WTC11 (cell line): ENCODE measurements at regions of chr11 and their contacts with region 1.

Region 1: DNA sequence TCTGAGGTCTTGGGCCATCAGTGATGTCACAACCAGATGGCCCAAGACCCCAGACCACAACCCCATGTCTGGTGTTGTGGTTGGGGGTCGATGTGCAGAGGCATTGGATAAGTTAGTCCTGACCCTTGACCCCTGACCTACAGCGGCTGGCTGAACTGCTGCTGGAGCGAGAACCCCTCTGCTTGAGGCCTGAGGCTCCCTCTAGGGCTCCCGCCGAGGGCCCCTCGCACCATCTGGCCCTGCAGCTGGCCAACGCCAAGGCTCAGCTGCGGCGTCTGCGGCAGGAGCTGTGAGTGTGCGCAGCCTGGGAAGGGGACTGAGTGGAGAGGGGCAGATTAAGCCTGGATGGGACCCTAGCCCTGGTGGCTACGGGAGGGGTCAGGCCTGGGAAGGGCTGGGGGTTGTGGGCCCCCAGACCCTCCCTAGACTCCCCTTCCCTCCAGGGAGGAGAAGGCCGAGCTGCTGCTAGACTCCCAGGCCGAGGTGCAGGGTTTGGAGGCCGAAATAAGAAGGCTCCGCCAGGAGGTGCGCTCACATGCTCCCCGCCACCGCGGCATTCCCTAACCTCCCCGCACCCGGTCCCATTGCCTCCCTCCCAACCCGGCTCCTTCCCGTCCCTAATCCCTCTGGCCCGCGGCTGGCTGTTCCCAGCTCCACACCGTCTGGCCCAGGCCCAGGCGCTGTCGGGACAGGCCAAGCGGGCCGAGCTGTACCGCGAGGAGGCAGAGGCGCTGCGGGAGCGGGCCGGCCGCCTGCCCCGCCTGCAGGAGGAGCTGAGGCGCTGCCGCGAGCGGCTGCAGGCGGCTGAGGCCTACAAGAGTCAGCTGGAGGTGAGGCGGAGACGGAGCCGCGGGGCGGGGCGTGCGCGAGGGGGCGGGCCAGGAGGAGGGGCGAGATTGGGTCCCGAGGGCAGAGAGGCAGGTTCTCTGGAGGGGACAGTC is 2.1 kb downstream of the CCDC88B start:
- DNase-seq: peak; percentile 97
- ATAC-seq: peak; percentile 75
- H3K4me3 Mint-ChIP-seq: peak overlapping the region; percentile 69
- H3K27ac Mint-ChIP-seq: no peak overlapping the region
- H3K4me1 Mint-ChIP-seq: peaks cover 21% of the 10 kb centered on the region
- H3K27me3 Mint-ChIP-seq: peaks cover 30% of the 10 kb centered on the region
- CTCF ChIP-seq: no peak

Region 2: DNA sequence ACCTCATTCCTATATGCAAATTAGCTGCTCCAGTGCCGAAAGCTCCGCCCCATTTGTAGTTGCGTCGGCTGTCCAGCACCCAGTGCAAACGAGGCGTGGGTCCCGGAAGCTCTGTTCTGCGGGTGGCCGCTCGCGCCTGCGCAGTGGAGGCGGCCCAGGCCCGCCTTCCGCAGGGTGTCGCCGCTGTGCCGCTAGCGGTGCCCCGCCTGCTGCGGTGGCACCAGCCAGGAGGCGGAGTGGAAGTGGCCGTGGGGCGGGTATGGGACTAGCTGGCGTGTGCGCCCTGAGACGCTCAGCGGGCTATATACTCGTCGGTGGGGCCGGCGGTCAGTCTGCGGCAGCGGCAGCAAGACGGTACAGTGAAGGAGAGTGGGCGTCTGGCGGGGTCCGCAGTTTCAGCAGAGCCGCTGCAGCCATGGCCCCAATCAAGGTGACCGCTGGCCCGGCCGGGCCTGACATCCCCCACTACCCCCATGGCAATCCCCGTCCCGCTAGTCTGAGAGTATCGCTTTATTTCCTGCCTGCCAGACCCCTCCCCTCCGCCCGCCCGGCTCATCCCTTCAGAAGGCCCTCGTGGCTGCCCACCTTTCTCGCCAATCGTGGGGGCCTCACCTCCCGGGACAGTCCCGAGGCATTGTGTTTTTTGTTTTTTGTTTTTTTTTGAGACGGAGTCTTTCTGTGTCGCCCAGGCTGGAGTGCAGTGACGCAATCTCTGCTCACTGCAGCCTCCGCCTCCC is 24.0 kb before region 1 on chr11 and contains the start of gene PRDX5:
- CTCF ChIA-PET with region 1: interaction called, 123 read pairs
- POLR2A ChIA-PET with region 1: interaction called, 14 read pairs
- DNase-seq: peak; percentile 90
- ATAC-seq: peak; percentile 71
- H3K4me3 Mint-ChIP-seq: peak within 1 kb of the TSS; percentile 90
- H3K27ac Mint-ChIP-seq: peak within 1 kb of the TSS; percentile 99
- H3K4me1 Mint-ChIP-seq: peaks cover 17% of the 10 kb centered on the region
- H3K27me3 Mint-ChIP-seq: no peaks in the 10 kb centered on the region
- CTCF ChIP-seq: no peak
- total RNA-seq, gene PRDX5: 255 to 293 TPM (median 282 TPM) in 3 replicates

Region 3: GRCh38 chr11:64331557-64332371 is 10.4 kb before region 1 on chr11:
- CTCF ChIA-PET with region 1: interaction called, 118 read pairs
- POLR2A ChIA-PET with region 1: no interaction called
- DNase-seq: peak; percentile 65
- ATAC-seq: peak; percentile 79
- H3K4me3 Mint-ChIP-seq: no peak overlapping the region
- H3K27ac Mint-ChIP-seq: peak overlapping the region; percentile 11
- H3K4me1 Mint-ChIP-seq: peaks cover 10% of the 10 kb centered on the region
- H3K27me3 Mint-ChIP-seq: peaks cover 12% of the 10 kb centered on the region; the same call in 1 of the 2 replicates
- CTCF ChIP-seq: no peak

Region 4: GRCh38 chr11:64378335-64378880 is 36.3 kb after region 1 on chr11:
- CTCF ChIA-PET with region 1: interaction called, 15 read pairs
- POLR2A ChIA-PET with region 1: no interaction called
- DNase-seq: no peak
- ATAC-seq: no peak
- H3K4me3 Mint-ChIP-seq: no peak overlapping the region
- H3K27ac Mint-ChIP-seq: no peak overlapping the region
- H3K4me1 Mint-ChIP-seq: peaks cover 5% of the 10 kb centered on the region
- H3K27me3 Mint-ChIP-seq: peaks cover 6% of the 10 kb centered on the region; the same call in 1 of the 2 replicates
- CTCF ChIP-seq: no peak

Region 5: DNA sequence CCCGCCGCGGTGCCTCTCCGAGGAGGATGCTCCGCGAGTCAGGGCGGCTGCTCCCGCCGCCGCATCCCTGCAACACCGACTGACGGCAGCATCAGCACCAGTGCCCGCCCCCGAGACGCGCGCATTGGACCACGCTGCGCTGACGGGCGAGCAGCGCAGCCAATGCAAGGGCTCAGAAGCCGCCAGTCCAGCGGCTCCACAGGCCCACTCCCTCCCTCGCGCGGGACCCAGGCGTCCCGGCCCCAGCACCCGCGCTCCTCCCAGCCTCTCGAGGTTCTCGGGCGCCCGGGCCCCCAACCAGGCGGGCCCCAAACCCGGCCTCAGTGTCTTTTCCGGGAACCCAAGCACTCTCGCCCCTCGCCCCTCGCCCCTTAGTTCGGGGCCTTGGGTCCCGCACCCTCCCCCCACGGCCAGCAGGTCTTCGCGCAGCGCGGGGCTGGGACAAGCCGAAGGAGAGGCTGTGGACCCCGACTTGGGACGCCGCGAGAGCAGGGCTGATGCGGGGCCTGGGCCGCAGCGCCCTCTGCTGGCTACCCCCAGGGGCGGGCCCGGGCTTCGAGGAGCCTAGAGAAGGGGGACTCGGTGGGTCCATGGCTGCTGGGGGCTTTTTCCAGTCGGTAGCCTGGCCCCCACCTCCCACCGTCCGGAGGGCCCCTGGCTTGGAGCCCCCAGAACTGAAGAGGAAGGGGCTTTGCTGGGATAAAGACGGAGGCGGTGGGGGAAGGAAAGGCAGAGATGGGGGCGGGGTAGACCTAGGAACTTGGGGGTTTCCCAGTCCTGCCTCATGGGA is 381.2 kb after region 1 on chr11 and contains the start of gene NRXN2:
- CTCF ChIA-PET with region 1: no interaction called
- POLR2A ChIA-PET with region 1: no interaction called
- DNase-seq: peak; percentile 87
- ATAC-seq: peak; percentile 88
- H3K4me3 Mint-ChIP-seq: peak within 1 kb of the TSS; percentile 50
- H3K27ac Mint-ChIP-seq: no peak within 1 kb of the TSS
- H3K4me1 Mint-ChIP-seq: peaks cover 44% of the 10 kb centered on the region
- H3K27me3 Mint-ChIP-seq: peaks cover 47% of the 10 kb centered on the region
- CTCF ChIP-seq: peak; percentile 93
- total RNA-seq, gene NRXN2: 8.0 to 10.4 TPM (median 8.6 TPM) in 3 replicates